ENCODE measurements at regions of chr6 and their contacts with region 1.

Region 1: DNA sequence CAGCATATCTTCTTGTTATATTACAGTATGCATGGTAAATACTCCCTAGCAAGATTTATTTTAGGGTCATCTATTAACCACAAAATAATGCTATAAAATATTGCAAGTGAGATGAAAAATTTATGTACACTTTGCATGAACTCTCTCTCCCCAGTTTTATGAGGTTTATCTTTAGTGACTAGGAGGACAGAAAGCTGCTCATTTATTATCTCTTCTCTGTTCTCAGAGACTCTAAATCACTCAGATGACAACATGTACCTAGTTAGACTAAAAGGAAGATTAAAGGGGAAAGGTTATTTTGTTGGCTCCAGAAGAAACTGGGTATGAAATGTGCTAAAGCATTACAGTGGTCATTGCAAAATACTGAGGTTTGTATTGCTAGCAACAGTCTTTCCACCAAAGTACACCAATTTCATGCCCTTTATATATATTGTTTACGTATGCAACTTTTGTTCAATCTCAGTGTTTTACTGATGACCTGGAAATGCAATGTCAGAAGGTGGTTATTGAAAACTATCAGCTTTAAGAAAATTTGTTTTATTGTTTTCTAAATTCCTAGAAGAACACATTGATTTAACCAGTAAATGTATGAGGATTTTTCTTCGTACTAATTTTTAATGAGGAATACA is 11.8 kb downstream of the RFX6 start:
- DNase-seq: no peak
- H3K4me3 ChIP-seq: no peak overlapping the region
- H3K4me3 Mint-ChIP-seq: no peak overlapping the region
- H3K27ac Mint-ChIP-seq: no peak overlapping the region
- H3K4me1 ChIP-seq: peaks cover 9% of the 10 kb centered on the region
- H3K4me1 Mint-ChIP-seq: no peaks in the 10 kb centered on the region
- H3K27me3 ChIP-seq: no peaks in the 10 kb centered on the region
- H3K27me3 Mint-ChIP-seq: no peaks in the 10 kb centered on the region
- CTCF ChIP-seq: no peak

Region 2: GRCh38 chr6:116859264-116859663 is 29.6 kb before region 1 on chr6:
- CTCF ChIA-PET with region 1: no interaction called
- POLR2A ChIA-PET with region 1: no interaction called
- intact Hi-C with region 1: no loop called
- DNase-seq: no peak
- H3K4me3 ChIP-seq: no peak overlapping the region
- H3K4me3 Mint-ChIP-seq: no peak overlapping the region
- H3K27ac Mint-ChIP-seq: no peak overlapping the region
- H3K4me1 ChIP-seq: no peaks in the 10 kb centered on the region
- H3K4me1 Mint-ChIP-seq: no peaks in the 10 kb centered on the region
- H3K27me3 ChIP-seq: no peaks in the 10 kb centered on the region
- H3K27me3 Mint-ChIP-seq: no peaks in the 10 kb centered on the region
- CTCF ChIP-seq: no peak

Region 3: DNA sequence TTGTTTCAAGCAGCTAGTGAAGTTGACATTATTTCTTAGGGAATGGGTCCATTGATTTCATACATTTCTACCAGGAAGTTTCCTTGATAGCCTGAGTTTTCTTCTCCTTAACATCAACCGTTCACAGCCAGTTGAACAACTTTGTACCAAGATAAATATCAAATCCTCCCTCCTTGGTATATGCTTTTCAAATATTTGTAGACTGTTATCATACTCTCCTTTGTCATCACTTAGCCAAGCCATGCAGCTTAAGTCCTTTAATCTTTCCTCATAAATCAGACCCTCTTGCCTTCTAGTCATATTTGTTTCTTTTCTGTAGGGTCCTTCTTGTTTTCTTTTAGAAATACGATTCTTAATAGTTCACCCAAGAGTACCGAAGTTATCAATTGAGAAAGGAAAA is 13.8 kb after region 1 on chr6:
- CTCF ChIA-PET with region 1: no interaction called
- POLR2A ChIA-PET with region 1: no interaction called
- intact Hi-C with region 1: loop called (anchors 2 kb)
- DNase-seq: peak in 1 of 2 experiments; percentile 21
- H3K4me3 ChIP-seq: no peak overlapping the region
- H3K4me3 Mint-ChIP-seq: no peak overlapping the region
- H3K27ac Mint-ChIP-seq: no peak overlapping the region
- H3K4me1 ChIP-seq: peaks cover 10% of the 10 kb centered on the region
- H3K4me1 Mint-ChIP-seq: peaks cover 14% of the 10 kb centered on the region
- H3K27me3 ChIP-seq: no peaks in the 10 kb centered on the region
- H3K27me3 Mint-ChIP-seq: no peaks in the 10 kb centered on the region
- CTCF ChIP-seq: no peak

Region 4: GRCh38 chr6:116933485-116933884 is 44.6 kb after region 1 on chr6:
- CTCF ChIA-PET with region 1: no interaction called
- POLR2A ChIA-PET with region 1: no interaction called
- intact Hi-C with region 1: loop called (anchors 5 kb)
- DNase-seq: peak in 1 of 2 experiments; percentile 23
- H3K4me3 ChIP-seq: no peak overlapping the region
- H3K4me3 Mint-ChIP-seq: no peak overlapping the region
- H3K27ac Mint-ChIP-seq: no peak overlapping the region
- H3K4me1 ChIP-seq: peaks cover 12% of the 10 kb centered on the region
- H3K4me1 Mint-ChIP-seq: peaks cover 13% of the 10 kb centered on the region
- H3K27me3 ChIP-seq: no peaks in the 10 kb centered on the region
- H3K27me3 Mint-ChIP-seq: no peaks in the 10 kb centered on the region
- CTCF ChIP-seq: no peak